CD14-positive monocyte (primary cell): ENCODE measurements at regions of chr3 and their contacts with region 1.

Region 1: DNA sequence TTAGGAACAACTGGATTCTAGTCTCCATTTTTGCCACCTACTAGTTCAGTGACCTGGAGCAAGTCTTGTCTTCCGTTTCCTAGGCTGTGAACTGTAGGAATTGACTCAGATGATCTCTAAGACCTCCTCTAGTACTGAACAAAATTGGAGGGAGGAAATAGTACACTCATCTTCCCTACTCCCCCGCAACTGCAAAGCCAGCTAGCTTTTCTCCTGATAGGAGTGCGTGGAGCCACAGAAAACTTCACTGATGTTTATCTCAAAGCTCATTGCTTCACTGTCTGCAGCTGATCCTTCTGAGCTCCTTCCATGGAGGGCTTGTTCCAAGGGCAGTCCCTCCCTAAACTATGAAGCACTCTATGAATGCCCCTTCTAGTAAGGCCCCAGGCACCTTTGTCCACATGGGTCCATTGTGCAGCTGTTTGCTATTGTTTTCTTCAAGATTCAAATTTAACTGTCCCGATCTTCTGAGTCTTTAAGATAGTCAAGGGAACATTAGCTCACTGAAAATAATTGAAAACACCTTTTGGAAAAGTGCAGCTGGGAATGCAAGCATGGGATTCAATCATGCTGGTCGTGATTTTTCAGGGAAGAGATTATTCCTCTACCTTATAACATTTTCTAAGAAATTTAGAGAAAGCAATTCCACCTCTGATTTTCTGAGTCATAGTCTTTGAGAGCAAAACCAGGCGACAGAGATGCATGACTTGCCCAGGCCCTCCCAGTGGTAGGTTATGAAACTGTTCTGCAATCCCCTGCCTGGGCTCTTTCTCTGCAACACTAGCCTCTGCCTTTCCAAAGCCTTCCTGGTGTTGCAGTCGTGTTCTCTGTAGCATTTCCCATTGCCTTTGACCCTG is 24.3 kb downstream of the FILIP1L start:
- DNase-seq: peak; percentile 27 to 60 (median 46)
- H3K4me3 ChIP-seq: no peak overlapping the region
- H3K4me3 Mint-ChIP-seq: no peak overlapping the region
- H3K27ac ChIP-seq: no peak overlapping the region
- H3K27ac Mint-ChIP-seq: peak overlapping the region in 1 of 7 donors; percentile 68
- H3K4me1 ChIP-seq: peaks cover 6 to 11% of the 10 kb centered on the region in 2 donors
- H3K4me1 Mint-ChIP-seq: peaks cover 12% of the 10 kb centered on the region
- H3K27me3 ChIP-seq: no peaks in the 10 kb centered on the region
- H3K27me3 Mint-ChIP-seq: no peaks in the 10 kb centered on the region
- CTCF ChIP-seq: peak; percentile 69

Region 2: DNA sequence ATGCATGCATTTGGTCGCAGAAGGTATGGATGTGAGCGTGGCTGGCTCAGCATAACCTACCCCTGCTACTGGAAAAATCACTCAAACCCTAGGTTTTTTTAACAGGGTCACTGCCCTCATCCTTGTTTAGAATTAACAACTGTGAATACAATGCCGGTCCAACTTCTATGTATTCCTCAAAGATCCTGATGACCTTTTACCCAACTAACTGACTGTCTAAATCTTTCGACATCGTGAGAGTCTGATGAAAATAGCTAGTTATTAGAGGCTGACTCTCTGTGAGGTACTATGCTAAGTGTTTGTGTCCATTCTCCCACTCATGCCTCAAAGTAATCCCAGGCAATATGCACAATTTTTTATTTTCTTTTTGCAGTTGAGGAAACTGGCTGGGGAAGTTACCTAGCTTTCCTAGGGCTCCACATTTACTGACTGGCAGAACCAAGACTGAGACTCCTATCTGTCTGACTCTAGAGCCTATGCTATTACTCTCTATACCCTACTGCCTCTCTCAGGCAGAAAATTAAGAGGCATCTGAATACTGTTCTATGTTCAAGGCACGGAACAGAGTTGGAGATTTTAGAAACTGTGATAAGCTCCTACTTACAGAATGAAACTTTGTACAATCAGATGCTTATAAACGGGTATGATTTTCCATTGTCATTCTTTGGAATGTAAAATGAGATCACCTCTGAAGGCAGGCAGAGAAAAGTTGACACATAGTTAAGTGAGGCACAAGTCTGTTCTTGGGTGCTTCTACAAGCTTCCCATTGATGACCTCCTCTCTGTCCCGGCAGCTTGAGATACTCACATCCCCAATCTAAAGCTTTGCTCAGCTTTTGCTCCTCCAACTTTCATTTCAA is 32.1 kb before region 1 on chr3:
- intact Hi-C with region 1: no loop called
- DNase-seq: no peak
- H3K4me3 ChIP-seq: no peak overlapping the region
- H3K4me3 Mint-ChIP-seq: no peak overlapping the region
- H3K27ac ChIP-seq: no peak overlapping the region
- H3K27ac Mint-ChIP-seq: no peak overlapping the region
- H3K4me1 ChIP-seq: peaks cover 11 to 17% of the 10 kb centered on the region in 2 donors
- H3K4me1 Mint-ChIP-seq: peaks cover 15% of the 10 kb centered on the region
- H3K27me3 ChIP-seq: no peaks in the 10 kb centered on the region
- H3K27me3 Mint-ChIP-seq: peaks cover 0 to 4% (median 1%) of the 10 kb centered on the region in 3 donors
- CTCF ChIP-seq: no peak

Region 3: GRCh38 chr3:100103558-100104441 is 13.8 kb after region 1 on chr3:
- intact Hi-C with region 1: loop called in 1 of 2 experiments (anchors 2 kb)
- DNase-seq: no peak
- H3K4me3 ChIP-seq: no peak overlapping the region
- H3K4me3 Mint-ChIP-seq: no peak overlapping the region
- H3K27ac ChIP-seq: no peak overlapping the region
- H3K27ac Mint-ChIP-seq: no peak overlapping the region
- H3K4me1 ChIP-seq: no peaks in the 10 kb centered on the region
- H3K4me1 Mint-ChIP-seq: peaks cover 13% of the 10 kb centered on the region
- H3K27me3 ChIP-seq: no peaks in the 10 kb centered on the region
- H3K27me3 Mint-ChIP-seq: peaks cover 0 to 2% (median 0%) of the 10 kb centered on the region in 3 donors
- CTCF ChIP-seq: no peak

Region 4: DNA sequence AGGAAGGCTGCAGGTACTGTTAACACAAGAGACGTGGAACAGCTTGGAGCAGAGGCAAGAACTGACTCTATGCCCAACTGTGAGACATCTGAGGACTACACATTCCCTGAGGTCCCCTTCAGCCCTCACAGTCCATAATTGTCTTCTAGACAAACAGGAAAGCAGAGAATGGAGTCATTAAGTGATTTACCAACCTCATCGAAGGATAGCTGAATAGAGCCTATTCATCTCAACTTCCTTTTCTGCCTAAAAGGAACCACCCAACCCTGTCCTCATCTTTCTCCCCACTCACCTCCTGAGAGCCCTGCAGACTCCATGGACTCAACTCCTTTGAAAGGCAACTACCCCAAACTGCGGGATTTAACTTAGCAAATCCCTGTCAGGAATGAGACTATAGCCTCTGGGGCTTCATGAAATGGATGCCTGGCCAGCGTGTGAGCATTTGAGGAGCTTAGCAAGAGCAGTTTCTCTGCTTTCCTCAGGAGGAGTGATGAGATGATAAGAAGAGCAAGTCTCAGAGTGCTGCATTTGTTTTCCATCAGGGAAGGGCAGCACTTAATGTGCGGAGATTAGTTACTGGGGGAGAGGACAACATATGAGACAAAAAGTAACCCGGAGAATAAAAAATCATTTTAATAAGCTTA is 85.7 kb after region 1 on chr3:
- intact Hi-C with region 1: no loop called
- DNase-seq: no peak
- H3K4me3 ChIP-seq: no peak overlapping the region
- H3K4me3 Mint-ChIP-seq: no peak overlapping the region
- H3K27ac ChIP-seq: no peak overlapping the region
- H3K27ac Mint-ChIP-seq: peak overlapping the region in 1 of 7 donors; percentile 7
- H3K4me1 ChIP-seq: no peaks in the 10 kb centered on the region
- H3K4me1 Mint-ChIP-seq: peaks cover 2% of the 10 kb centered on the region
- H3K27me3 ChIP-seq: no peaks in the 10 kb centered on the region
- H3K27me3 Mint-ChIP-seq: peaks cover 0 to 1% (median 0%) of the 10 kb centered on the region in 3 donors
- CTCF ChIP-seq: no peak

Region 5: DNA sequence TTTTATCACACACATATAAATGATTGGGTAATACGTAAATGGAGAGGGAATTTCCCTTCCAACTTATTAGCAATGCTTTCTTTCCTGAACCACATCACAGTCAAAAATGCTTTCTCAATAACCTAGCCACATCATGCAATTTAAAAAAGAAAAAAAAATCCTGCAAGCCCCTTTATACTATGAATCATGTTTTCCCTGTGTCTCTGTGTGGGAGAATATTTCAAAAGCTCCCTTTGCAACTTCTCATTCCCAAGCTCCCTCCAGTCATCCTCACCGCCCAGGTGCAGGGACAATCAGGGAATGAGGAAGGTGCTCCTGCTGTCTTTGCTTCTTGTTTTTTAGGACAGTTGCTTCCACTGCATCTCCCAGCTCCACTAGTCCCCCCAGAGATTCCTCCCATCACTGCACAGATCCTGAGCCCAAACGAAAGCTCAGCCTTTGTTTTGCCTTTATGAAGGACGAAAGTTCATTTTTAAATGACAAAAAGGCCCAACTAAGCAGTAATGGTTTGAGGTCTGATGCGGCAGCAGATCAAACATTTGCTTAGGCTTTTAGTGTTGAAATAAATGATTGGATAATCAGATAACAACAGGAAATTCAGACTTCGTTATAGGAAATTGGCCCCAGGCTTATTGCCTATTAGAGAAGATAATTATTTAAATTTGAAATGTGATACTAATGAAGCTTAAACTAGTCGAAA is 471.6 kb after region 1 on chr3:
- intact Hi-C with region 1: no loop called
- DNase-seq: peak; percentile 18 to 62 (median 49)
- H3K4me3 ChIP-seq: no peak overlapping the region
- H3K4me3 Mint-ChIP-seq: no peak overlapping the region
- H3K27ac ChIP-seq: no peak overlapping the region
- H3K27ac Mint-ChIP-seq: peak overlapping the region in 3 of 7 donors; percentile 14 to 79 (median 32)
- H3K4me1 ChIP-seq: peaks cover 23 to 34% of the 10 kb centered on the region in 2 donors
- H3K4me1 Mint-ChIP-seq: peaks cover 36% of the 10 kb centered on the region
- H3K27me3 ChIP-seq: no peaks in the 10 kb centered on the region
- H3K27me3 Mint-ChIP-seq: no peaks in the 10 kb centered on the region
- CTCF ChIP-seq: no peak